ENCODE measurements at regions of chr6 and their contacts with region 1.

Region 1: GRCh38 chr6:43516697-43517504 is at the starts of genes POLR1C and YIPF3:
- DNase-seq: peak; percentile 97
- ATAC-seq: peak; percentile 91
- H3K4me3 ChIP-seq: peak within 1 kb of the TSS; percentile 80
- H3K27ac ChIP-seq: peak within 1 kb of the TSS; percentile 83
- H3K4me1 ChIP-seq: peaks cover 10% of the 10 kb centered on the region
- H3K27me3 ChIP-seq: no peaks in the 10 kb centered on the region
- CTCF ChIP-seq: no peak
- POLR2A ChIP-seq: peak; percentile 90
- RAD21 ChIP-seq: no peak
- total RNA-seq, gene POLR1C: 69.4 and 72.6 TPM in 2 replicates
- total RNA-seq, gene YIPF3: 114 and 120 TPM in 2 replicates

Region 2: DNA sequence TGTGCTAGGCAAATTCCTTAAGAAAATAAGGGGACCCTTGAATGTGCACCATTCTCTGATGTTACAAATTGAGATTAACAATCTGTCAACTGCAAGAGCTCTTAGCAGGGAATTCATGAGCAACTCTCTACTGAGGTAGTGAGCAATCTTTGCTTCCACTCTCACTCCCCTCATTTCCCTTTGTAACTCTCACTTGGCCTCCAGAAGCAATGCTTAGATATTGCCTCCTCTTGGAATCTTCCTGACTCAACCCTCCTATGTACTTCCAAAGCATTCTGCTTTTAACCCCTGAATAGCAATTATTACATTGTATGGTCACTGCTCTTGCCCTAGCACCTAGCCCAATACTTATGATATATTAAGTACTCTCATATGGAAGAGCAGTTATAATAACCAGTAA is 42.4 kb after region 1 on chr6:
- CTCF ChIA-PET with region 1: no interaction called
- POLR2A ChIA-PET with region 1: interaction called, 12 read pairs
- dilution Hi-C with region 1: no loop called
- in situ Hi-C with region 1: no loop called
- intact Hi-C with region 1: loop called (anchors 5 kb)
- DNase-seq: no peak
- ATAC-seq: no peak
- H3K4me3 ChIP-seq: no peak overlapping the region
- H3K27ac ChIP-seq: no peak overlapping the region
- H3K4me1 ChIP-seq: no peaks in the 10 kb centered on the region
- H3K27me3 ChIP-seq: no peaks in the 10 kb centered on the region
- CTCF ChIP-seq: no peak
- POLR2A ChIP-seq: no peak
- RAD21 ChIP-seq: no peak